ENCODE measurements at regions of chr16 and their contacts with region 1.

Region 1: DNA sequence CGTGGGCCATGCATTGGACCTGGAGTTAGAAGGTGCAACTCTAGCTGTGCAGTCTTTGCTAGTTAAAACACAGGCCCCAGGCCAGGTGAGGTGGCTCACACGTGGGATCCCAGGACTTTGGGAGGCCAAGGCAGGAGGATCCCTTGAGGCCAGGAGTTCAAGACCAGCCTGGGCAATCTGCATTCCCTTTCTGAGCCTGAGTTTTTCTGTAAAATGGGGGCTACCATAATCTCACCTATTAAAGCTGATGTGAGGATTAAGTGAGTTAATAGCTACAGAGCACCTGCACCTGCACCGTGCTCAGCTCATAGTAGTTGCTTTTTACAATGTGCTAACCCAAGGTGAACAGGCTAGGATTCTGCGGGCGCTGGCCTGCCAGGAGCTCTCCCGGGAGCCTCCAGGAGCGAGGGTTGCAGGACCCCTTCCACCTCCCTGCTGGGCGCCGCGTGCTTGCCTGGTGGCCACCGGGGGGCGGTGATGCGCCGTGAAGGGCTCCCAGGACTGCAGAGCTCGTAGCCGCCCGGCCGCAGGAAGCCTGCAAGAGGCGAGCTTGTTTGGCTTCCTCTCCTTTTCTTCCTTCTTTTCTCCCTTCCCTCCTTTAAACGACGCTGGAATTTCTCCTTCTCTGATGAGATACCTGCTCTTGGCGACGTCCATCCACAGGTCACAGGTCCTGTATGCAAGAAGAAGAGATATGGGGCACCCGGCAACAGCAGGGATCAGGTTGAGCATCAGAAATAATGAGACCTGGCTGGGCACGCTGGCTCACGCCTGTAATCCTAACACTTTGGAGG is 51.3 kb downstream of the ZFP90 start:
- DNase-seq: peak; percentile 64 to 97
- H3K4me3 ChIP-seq: no peak overlapping the region
- H3K27ac ChIP-seq: no peak overlapping the region
- H3K4me1 ChIP-seq: 0 out of 7 replicates have a peak, but pooled peaks cover 0 to 3% (median 0%) of the 10 kb centered on the region in 4 experiments
- H3K27me3 ChIP-seq: no peaks in the 10 kb centered on the region
- CTCF ChIP-seq: peak; percentile 83 to 89 (median 86)
- EP300 ChIP-seq: no peak
- POLR2A ChIP-seq: no peak
- RAD21 ChIP-seq: peak; percentile 94 to 96

Region 2: DNA sequence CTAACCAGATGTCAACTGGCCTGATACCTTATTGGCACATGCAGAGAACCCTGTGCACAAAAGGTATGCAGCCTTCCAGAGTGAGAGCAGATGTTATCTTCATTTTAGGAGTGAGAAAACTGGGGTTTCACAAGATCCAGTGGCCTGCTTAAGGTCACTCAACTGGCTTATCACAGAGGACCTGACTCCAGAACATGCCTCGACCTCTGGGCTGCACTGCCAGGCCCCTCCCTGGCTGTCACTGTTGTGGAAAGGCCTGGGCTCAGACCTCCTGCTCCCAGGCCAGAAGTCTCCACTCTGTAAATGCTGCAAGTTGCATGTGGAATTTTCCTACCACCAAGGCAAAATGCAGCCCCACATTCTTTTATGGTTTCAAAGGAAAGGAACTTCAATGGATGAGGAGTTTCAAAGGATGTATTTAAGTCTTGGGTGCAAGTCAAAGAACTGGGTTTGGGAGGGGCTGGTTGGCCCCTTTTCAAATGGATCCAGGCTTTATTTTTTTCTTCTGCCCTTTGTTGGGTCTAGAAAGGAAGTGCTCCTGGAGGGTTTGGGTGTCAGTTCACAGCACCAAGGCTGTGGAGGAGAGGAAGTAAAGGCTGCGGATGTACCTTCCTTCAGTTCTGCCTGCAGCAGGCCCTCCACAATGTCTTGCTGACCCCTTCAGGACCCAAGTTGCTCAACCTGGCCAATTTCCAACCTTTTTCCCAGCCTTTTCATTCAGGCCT is 111.7 kb before region 1 on chr16:
- CTCF ChIA-PET with region 1: no interaction called
- POLR2A ChIA-PET with region 1: no interaction called
- DNase-seq: no peak
- H3K4me3 ChIP-seq: no peak overlapping the region
- H3K27ac ChIP-seq: no peak overlapping the region
- H3K4me1 ChIP-seq: peaks cover 0 to 8% (median 2%) of the 10 kb centered on the region in 4 experiments; a peak in 4 of 7 replicates
- H3K27me3 ChIP-seq: no peaks in the 10 kb centered on the region
- CTCF ChIP-seq: no peak
- EP300 ChIP-seq: no peak
- POLR2A ChIP-seq: no peak
- RAD21 ChIP-seq: peak in 1 of 2 experiments; percentile 14; a peak in 1 of 4 replicates

Region 3: GRCh38 chr16:68528686-68529379 is 61.6 kb before region 1 on chr16:
- CTCF ChIA-PET with region 1: interaction called, 72 read pairs
- POLR2A ChIA-PET with region 1: interaction called, 5 read pairs
- DNase-seq: peak; percentile 74 to 94
- H3K4me3 ChIP-seq: peak overlapping the region in 1 of 4 experiments; percentile 8; a peak in 1 of 8 replicates
- H3K27ac ChIP-seq: no peak overlapping the region
- H3K4me1 ChIP-seq: peaks cover 0 to 3% (median 3%) of the 10 kb centered on the region in 4 experiments; a peak in 4 of 7 replicates
- H3K27me3 ChIP-seq: peaks cover 4 to 21% (median 15%) of the 10 kb centered on the region in 4 experiments
- CTCF ChIP-seq: peak; percentile 94 to 99 (median 98)
- EP300 ChIP-seq: no peak
- POLR2A ChIP-seq: no peak
- RAD21 ChIP-seq: peak; percentile 97

Region 4: DNA sequence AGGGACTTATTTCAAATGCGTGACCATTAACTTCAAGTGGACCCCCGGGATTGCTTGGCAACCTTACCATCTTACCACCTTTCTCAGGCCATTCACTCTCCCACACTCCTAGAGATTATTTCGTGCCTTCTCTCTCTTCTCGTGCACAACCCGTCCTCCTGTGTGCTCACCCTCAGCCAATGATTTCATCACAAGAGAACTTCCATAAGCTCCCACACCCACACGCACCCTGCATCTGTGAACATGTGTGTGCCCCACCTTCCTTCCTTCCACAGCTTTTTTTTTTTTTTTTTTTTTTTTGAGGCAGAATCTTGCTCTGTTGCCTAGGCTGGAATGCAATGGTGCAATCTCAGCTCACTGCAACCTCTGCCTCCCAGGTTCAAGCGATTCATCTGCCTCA is 27.3 kb after region 1 on chr16:
- CTCF ChIA-PET with region 1: no interaction called
- POLR2A ChIA-PET with region 1: no interaction called
- DNase-seq: no peak
- H3K4me3 ChIP-seq: no peak overlapping the region
- H3K27ac ChIP-seq: no peak overlapping the region; the same call in 1 of the 2 replicates
- H3K4me1 ChIP-seq: no peaks in the 10 kb centered on the region
- H3K27me3 ChIP-seq: no peaks in the 10 kb centered on the region
- CTCF ChIP-seq: no peak
- EP300 ChIP-seq: no peak
- POLR2A ChIP-seq: no peak
- RAD21 ChIP-seq: no peak

Region 5: DNA sequence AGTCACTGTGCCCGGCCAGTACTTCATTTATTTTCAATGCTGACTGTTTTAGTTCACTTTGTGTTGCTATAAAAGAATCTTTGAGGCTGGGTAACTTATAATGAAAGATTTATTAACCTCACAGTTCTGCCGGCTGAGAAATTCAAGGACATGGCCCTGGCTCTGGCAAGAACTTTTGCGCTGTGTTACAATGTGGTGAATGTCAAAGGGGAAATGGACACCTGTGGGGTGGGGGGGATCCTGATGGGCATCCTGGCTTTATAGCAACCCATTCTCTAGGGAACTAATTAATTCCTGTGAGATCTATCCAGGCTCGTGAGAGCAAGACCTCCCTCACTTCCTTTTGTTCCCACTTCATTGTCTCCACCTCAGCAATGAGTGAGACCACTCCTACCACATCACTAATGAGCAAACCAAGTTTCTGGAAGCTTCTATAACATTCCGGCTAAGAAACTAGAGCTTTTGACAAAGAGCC is 37.6 kb after region 1 on chr16:
- CTCF ChIA-PET with region 1: interaction called, 22 read pairs
- POLR2A ChIA-PET with region 1: no interaction called
- DNase-seq: no peak
- H3K4me3 ChIP-seq: no peak overlapping the region
- H3K27ac ChIP-seq: no peak overlapping the region
- H3K4me1 ChIP-seq: no peaks in the 10 kb centered on the region
- H3K27me3 ChIP-seq: no peaks in the 10 kb centered on the region
- CTCF ChIP-seq: no peak
- EP300 ChIP-seq: no peak
- POLR2A ChIP-seq: no peak
- RAD21 ChIP-seq: no peak

Region 6: DNA sequence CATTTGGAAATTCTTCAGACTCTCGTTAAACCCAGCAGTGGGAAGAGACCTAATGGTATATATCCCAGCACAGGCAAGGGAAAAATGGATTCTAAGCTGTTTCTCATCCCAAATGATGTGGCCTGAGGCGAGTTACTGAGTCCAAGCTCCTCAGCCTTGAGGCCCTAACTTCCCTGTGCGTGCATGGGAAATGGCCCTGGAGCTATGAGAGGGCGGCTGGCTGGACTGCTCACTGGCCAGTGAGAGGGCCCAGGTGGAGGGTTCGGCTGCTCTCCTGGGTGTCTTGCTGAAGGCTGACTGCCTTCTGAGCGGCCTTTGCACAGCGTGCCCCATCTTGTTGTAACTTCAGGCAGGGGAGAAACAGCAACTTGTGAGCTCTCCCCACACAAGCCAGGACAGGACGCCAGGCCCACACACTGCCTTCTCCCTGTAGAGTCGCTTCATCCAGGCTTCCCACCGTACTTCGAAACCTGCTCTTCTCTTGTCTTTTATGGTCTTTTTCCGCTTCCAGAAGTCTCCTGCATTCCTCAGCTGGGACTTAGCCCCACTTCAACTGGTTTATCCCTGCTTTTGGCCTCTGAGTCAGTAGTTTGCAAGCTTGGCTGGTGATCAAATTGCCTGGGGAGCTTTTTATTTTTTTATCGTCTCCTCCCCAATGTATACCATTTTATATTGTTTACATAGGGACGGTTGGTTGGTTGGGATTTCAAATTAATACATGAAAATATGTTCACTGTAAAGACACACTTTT is 68.0 kb after region 1 on chr16:
- CTCF ChIA-PET with region 1: interaction called, 16 read pairs
- POLR2A ChIA-PET with region 1: interaction called, 5 read pairs
- DNase-seq: no peak
- H3K4me3 ChIP-seq: no peak overlapping the region
- H3K27ac ChIP-seq: no peak overlapping the region
- H3K4me1 ChIP-seq: peaks cover 0 to 6% (median 0%) of the 10 kb centered on the region in 4 experiments; a peak in 1 of 7 replicates
- H3K27me3 ChIP-seq: no peaks in the 10 kb centered on the region
- CTCF ChIP-seq: no peak
- EP300 ChIP-seq: no peak
- POLR2A ChIP-seq: no peak
- RAD21 ChIP-seq: no peak

Region 7: GRCh38 chr16:68689925-68690324 is 99.5 kb after region 1 on chr16:
- CTCF ChIA-PET with region 1: interaction called, 17 read pairs
- POLR2A ChIA-PET with region 1: interaction called, 4 read pairs
- DNase-seq: no peak
- H3K4me3 ChIP-seq: no peak overlapping the region
- H3K27ac ChIP-seq: no peak overlapping the region
- H3K4me1 ChIP-seq: no peaks in the 10 kb centered on the region
- H3K27me3 ChIP-seq: no peaks in the 10 kb centered on the region; a peak in 1 of 7 replicates
- CTCF ChIP-seq: no peak; a peak in 1 of 4 replicates
- EP300 ChIP-seq: no peak
- POLR2A ChIP-seq: no peak
- RAD21 ChIP-seq: peak; percentile 26 to 37; a peak in 3 of 4 replicates

Region 8: GRCh38 chr16:68756250-68756915 is 166.0 kb after region 1 on chr16:
- CTCF ChIA-PET with region 1: no interaction called
- POLR2A ChIA-PET with region 1: no interaction called
- DNase-seq: no peak
- H3K4me3 ChIP-seq: no peak overlapping the region
- H3K27ac ChIP-seq: no peak overlapping the region
- H3K4me1 ChIP-seq: peaks cover 3 to 16% (median 10%) of the 10 kb centered on the region in 4 experiments
- H3K27me3 ChIP-seq: no peaks in the 10 kb centered on the region
- CTCF ChIP-seq: no peak
- EP300 ChIP-seq: no peak
- POLR2A ChIP-seq: no peak
- RAD21 ChIP-seq: no peak

Measured in H1 (cell line).